HEK293 (cell line): ENCODE measurements at regions of chr16 and their contacts with region 1.

Region 1: GRCh38 chr16:54957403-54958171 is 26.9 kb downstream of the IRX5 start:
- H3K4me3 ChIP-seq: no peak overlapping the region
- H3K27ac ChIP-seq: no peak overlapping the region
- H3K4me1 ChIP-seq: no peaks in the 10 kb centered on the region
- CTCF ChIP-seq: peak; percentile 75

Region 2: GRCh38 chr16:54929090-54930004 is 28.2 kb before region 1 on chr16:
- CTCF ChIA-PET with region 1: no interaction called
- POLR2A ChIA-PET with region 1: no interaction called
- H3K4me3 ChIP-seq: peak overlapping the region; percentile 69
- H3K27ac ChIP-seq: peak overlapping the region; percentile 100
- H3K4me1 ChIP-seq: peaks cover 12% of the 10 kb centered on the region; the same call in 1 of the 2 replicates
- CTCF ChIP-seq: peak; percentile 86

Region 3: GRCh38 chr16:54968784-54969183 is 11.2 kb after region 1 on chr16:
- CTCF ChIA-PET with region 1: interaction called, 11 read pairs
- POLR2A ChIA-PET with region 1: no interaction called
- H3K4me3 ChIP-seq: no peak overlapping the region
- H3K27ac ChIP-seq: no peak overlapping the region
- H3K4me1 ChIP-seq: no peaks in the 10 kb centered on the region
- CTCF ChIP-seq: no peak